WTC11 (cell line): ENCODE measurements at regions of chr1 and their contacts with region 1.

Region 1: DNA sequence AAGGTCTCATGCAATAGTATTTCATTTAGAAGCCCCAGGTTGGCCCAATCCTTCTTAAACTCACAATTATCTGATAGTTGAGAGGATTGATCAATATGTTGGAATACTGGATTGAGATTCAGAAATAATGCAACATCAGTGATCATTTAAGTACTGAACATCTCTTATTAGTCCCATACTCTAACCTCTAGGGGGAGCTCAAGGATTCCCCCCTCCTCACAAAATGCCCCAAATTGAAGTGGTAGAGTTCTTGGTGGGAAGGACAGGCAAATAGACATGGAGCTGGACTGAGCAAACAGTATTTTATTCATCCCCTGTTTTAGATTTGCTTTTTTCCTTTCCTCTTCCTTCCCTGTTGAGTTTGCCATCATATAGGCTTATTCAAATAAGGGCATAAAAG is 62.8 kb downstream of the NGF start:
- DNase-seq: no peak
- ATAC-seq: peak; percentile 38; the same call in 1 of the 2 replicates
- H3K4me3 Mint-ChIP-seq: no peak overlapping the region
- H3K27ac Mint-ChIP-seq: no peak overlapping the region
- H3K4me1 Mint-ChIP-seq: no peaks in the 10 kb centered on the region
- H3K27me3 Mint-ChIP-seq: no peaks in the 10 kb centered on the region; the same call in 1 of the 2 replicates
- CTCF ChIP-seq: peak; percentile 52; the same call in 1 of the 2 replicates

Region 2: GRCh38 chr1:115261496-115261895 is 13.7 kb before region 1 on chr1:
- CTCF ChIA-PET with region 1: interaction called, 10 read pairs
- POLR2A ChIA-PET with region 1: no interaction called
- DNase-seq: no peak
- ATAC-seq: no peak
- H3K4me3 Mint-ChIP-seq: no peak overlapping the region
- H3K27ac Mint-ChIP-seq: no peak overlapping the region
- H3K4me1 Mint-ChIP-seq: no peaks in the 10 kb centered on the region
- H3K27me3 Mint-ChIP-seq: no peaks in the 10 kb centered on the region
- CTCF ChIP-seq: no peak

Region 3: DNA sequence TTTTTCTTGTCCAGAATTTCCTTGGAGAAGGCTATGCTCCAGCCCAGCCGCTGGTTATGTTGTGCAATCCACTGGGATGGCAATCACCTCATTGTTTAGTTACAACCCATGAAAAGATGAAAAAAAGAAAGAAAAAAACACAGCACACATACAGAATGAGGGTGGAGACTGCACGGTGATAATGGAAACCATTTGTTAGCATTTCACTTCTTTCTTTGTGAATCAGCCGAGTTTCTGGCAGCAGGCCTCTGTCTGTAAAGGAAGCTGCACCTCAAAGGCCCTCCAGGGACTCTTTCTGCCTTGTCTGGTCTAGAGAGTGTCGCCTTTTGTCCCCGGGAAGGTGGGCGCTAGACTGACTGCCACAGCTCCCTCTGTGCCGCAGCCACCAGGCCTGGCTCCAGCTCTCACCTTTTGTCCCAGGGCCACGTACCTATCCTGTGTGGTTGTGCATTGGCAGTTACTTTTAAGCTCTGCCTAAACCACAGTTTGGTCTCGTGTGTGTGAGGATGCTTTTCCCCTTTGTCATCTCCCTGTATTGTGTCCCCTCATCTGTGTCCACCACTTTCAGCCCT is 27.3 kb after region 1 on chr1:
- CTCF ChIA-PET with region 1: interaction called, 14 read pairs
- POLR2A ChIA-PET with region 1: no interaction called
- DNase-seq: no peak
- ATAC-seq: no peak
- H3K4me3 Mint-ChIP-seq: no peak overlapping the region
- H3K27ac Mint-ChIP-seq: no peak overlapping the region
- H3K4me1 Mint-ChIP-seq: peaks cover 29% of the 10 kb centered on the region
- H3K27me3 Mint-ChIP-seq: no peaks in the 10 kb centered on the region
- CTCF ChIP-seq: no peak

Region 4: DNA sequence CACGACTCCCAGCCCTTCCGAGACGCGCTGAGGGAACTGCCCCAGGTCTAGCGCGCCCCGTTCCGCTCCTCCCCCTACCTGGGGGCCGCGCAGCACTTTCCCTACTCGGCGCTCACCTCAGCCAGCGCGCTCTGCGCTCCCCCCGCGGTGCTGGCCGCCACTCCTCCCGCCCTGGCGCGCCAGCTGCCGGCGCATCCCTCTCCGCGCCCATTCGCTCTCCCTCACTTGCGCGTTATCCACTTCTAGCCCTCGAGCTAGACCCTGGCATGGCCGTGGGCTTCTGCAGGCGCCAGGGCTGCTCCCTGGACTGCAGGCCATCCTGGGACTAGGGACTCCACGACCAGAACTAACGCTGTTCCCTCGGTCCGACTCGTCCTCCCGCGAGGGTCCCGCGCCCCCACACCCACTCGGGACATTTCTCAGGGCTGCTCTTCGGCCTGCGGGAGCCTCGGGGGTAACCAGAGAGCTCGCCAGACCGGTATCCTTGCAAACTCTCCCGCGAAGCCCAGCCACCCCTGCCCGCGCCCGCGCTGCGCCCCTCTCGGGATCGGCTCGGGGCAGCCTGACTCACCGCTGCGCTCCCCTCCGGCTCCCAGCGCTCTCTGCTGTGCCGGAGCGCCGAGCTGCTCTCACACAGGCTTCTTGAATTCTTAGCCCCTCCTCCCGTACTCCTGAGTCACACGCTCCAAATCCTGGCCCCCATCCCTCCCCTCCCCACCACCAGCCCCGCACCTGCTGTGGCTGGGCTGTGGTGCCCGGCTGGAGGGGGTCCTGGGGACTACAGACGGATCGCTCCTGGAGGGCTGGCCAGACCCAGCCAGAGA is 62.6 kb after region 1 on chr1 and contains the start of gene NGF:
- CTCF ChIA-PET with region 1: interaction called, 23 read pairs
- POLR2A ChIA-PET with region 1: no interaction called
- DNase-seq: peak; percentile 73
- ATAC-seq: peak; percentile 90
- H3K4me3 Mint-ChIP-seq: peak within 1 kb of the TSS; percentile 87
- H3K27ac Mint-ChIP-seq: no peak within 1 kb of the TSS
- H3K4me1 Mint-ChIP-seq: peaks cover 20% of the 10 kb centered on the region
- H3K27me3 Mint-ChIP-seq: peaks cover 80% of the 10 kb centered on the region
- CTCF ChIP-seq: no peak
- total RNA-seq, gene NGF: 0.25 to 0.55 TPM (median 0.53 TPM) in 3 replicates

Region 5: DNA sequence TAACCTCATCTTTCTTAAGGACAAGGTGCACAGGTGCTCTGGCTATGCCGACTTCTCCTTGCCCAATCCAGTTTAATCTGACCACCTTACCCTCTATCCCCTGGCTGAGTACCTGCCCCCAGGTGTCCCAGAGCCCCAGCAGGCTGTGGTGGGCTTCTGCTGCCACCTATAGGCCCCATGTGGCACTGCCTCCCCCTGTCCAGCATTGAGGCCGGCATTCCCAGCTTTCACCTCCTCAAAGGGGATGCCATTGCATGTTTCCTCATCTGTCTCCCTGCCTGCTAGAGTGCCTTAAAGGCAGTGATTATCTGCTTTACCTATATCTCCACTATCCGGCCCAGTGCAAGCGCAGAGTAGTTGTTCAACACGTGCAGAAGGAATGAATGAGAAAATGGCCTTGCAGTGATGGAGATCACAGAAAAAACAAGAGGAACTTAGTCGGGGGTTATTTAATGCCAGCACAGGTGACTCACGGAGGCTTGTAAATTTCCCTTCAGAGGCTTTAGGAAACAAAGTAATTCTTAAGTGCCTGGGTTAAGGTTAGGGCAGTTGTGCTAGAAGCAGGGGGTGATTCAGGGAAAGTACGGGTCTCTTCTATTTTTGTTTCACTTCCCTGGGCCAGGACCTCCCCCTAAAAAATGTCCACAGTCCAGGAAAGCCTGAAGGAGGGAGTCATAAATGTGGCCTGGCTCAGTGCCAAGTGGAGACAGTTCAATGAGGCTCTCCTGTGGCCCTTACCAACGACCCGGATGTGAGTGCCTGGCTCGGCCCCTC is 194.7 kb after region 1 on chr1:
- CTCF ChIA-PET with region 1: interaction called, 36 read pairs
- POLR2A ChIA-PET with region 1: no interaction called
- DNase-seq: peak; percentile 88
- ATAC-seq: peak; percentile 96
- H3K4me3 Mint-ChIP-seq: no peak overlapping the region
- H3K27ac Mint-ChIP-seq: no peak overlapping the region; the same call in 1 of the 2 replicates
- H3K4me1 Mint-ChIP-seq: peaks cover 3% of the 10 kb centered on the region; the same call in 1 of the 2 replicates
- H3K27me3 Mint-ChIP-seq: no peaks in the 10 kb centered on the region
- CTCF ChIP-seq: peak; percentile 85